T-cell (primary cell): ENCODE measurements at regions of chr1 and their contacts with region 1.

Region 1: GRCh38 chr1:155989242-155990004 is 11.1 kb upstream of the ARHGEF2 start:
- DNase-seq: peak; percentile 58 to 90 (median 74)
- ATAC-seq: peak; percentile 94 to 98 (median 98)
- H3K4me3 ChIP-seq: no peak overlapping the region
- H3K4me3 Mint-ChIP-seq: no peak overlapping the region
- H3K27ac ChIP-seq: no peak overlapping the region
- H3K27ac Mint-ChIP-seq: peak overlapping the region in 1 of 2 donors; percentile 62
- H3K4me1 ChIP-seq: peaks cover 0 to 13% of the 10 kb centered on the region in 2 experiments
- H3K4me1 Mint-ChIP-seq: peaks cover 8 to 15% (median 14%) of the 10 kb centered on the region in 3 donors
- H3K27me3 ChIP-seq: no peaks in the 10 kb centered on the region
- H3K27me3 Mint-ChIP-seq: no peaks in the 10 kb centered on the region

Region 2: DNA sequence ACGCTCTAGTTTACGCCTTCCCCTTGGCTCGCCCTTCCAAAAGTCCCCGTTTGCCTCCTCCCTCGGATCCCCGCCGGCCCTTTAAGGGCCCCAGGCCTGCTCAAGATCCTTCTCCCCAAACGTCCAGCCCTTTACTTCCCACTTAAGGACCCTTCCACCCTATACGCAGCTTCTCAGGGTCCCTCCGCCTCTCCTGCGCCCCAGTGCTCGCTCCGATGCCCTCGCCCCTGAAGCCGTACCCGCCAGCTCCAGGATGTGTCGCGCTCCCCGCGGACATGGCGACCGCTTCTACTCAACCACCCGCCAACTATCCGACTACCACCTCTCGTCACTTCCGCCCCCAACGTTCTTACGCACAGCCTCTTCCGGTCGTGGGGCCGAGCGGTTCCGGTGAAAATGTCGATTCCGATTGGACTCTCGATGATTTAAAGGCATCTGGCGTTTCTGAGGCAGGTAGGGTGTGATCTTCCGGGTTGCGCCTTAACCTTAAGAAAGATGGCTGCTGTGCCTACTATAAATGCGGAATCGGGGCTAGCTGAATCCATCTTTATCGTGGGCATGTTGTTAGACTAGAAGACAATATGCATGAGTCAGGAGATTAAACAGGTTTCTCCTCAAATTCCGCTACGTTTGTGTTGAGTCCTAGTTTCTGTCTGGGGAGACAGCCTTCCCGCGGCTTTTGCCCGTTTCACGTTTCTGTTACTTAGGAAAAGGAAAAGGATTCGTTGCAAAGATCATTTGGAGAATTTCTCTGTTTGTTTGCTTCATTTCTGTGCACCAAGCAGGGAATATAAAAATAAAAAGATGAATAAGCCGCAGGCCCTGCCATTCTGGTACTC is 55.1 kb before region 1 on chr1 and contains the start of gene KHDC4:
- CTCF ChIA-PET with region 1: interaction called in 1 of 2 experiments, 19 read pairs
- POLR2A ChIA-PET with region 1: interaction called in 1 of 2 experiments, 3 read pairs
- DNase-seq: peak; percentile 84 to 99 (median 96)
- ATAC-seq: peak; percentile 94 to 97 (median 96)
- H3K4me3 ChIP-seq: peak within 1 kb of the TSS; percentile 66 to 90
- H3K4me3 Mint-ChIP-seq: no peak within 1 kb of the TSS
- H3K27ac ChIP-seq: peak within 1 kb of the TSS; percentile 84
- H3K27ac Mint-ChIP-seq: peak within 1 kb of the TSS in 1 of 2 donors; percentile 74
- H3K4me1 ChIP-seq: peaks cover 21 to 41% of the 10 kb centered on the region in 2 experiments
- H3K4me1 Mint-ChIP-seq: peaks cover 34 to 42% (median 37%) of the 10 kb centered on the region in 3 donors
- H3K27me3 ChIP-seq: no peaks in the 10 kb centered on the region
- H3K27me3 Mint-ChIP-seq: no peaks in the 10 kb centered on the region
- total RNA-seq, gene KHDC4: 44.5 to 102 (median 85.6) TPM

Region 3: GRCh38 chr1:156012051-156012817 is 22.8 kb after region 1 on chr1:
- CTCF ChIA-PET with region 1: no interaction called
- POLR2A ChIA-PET with region 1: no interaction called
- DNase-seq: no peak
- ATAC-seq: no peak
- H3K4me3 ChIP-seq: no peak overlapping the region
- H3K4me3 Mint-ChIP-seq: no peak overlapping the region
- H3K27ac ChIP-seq: no peak overlapping the region
- H3K27ac Mint-ChIP-seq: no peak overlapping the region
- H3K4me1 ChIP-seq: no peaks in the 10 kb centered on the region
- H3K4me1 Mint-ChIP-seq: peaks cover 8 to 18% (median 14%) of the 10 kb centered on the region in 3 donors
- H3K27me3 ChIP-seq: no peaks in the 10 kb centered on the region
- H3K27me3 Mint-ChIP-seq: no peaks in the 10 kb centered on the region